ENCODE measurements at regions of chr6 and their contacts with region 1.

Region 1: GRCh38 chr6:63598049-63599036 is 26.1 kb downstream of the LOC128125822 start:
- DNase-seq: peak; percentile 65 to 85 (median 74)
- ATAC-seq: peak; percentile 97
- H3K4me3 ChIP-seq: peak overlapping the region; percentile 43
- H3K27ac ChIP-seq: no peak overlapping the region; the same call in 2 of the 3 replicates
- H3K4me1 ChIP-seq: peaks cover 0 to 4% of the 10 kb centered on the region in 2 experiments; a peak in 3 of 5 replicates
- H3K27me3 ChIP-seq: no peaks in the 10 kb centered on the region
- CTCF ChIP-seq: peak; percentile 79 to 93 (median 89)
- EP300 ChIP-seq: no peak
- POLR2A ChIP-seq: no peak
- RAD21 ChIP-seq: peak; percentile 85 to 88

Region 2: DNA sequence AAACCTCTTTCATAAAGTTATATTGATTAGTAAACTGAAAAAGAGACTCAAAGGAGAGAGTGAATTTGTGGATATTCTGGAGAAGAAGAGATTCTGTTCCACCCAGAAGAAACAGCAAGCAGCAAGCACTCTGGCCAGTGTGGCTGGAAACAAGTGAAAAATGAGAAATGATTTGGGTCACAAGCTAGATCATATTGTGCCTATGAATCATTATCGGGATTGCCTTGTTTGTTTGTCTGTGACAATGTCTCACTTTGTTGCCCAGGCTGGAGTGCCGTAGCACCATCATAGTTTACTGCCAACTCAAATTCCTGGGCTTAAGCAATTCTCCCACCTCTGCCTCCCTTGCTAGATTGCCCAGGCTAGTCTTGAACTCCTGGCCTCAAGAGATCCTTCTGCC is 132.6 kb before region 1 on chr6:
- CTCF ChIA-PET with region 1: no interaction called
- POLR2A ChIA-PET with region 1: no interaction called
- in situ Hi-C with region 1: no loop called
- intact Hi-C with region 1: no loop called
- DNase-seq: no peak
- ATAC-seq: no peak
- H3K4me3 ChIP-seq: no peak overlapping the region
- H3K27ac ChIP-seq: no peak overlapping the region
- H3K4me1 ChIP-seq: no peaks in the 10 kb centered on the region
- H3K27me3 ChIP-seq: no peaks in the 10 kb centered on the region
- CTCF ChIP-seq: no peak
- EP300 ChIP-seq: no peak
- POLR2A ChIP-seq: no peak
- RAD21 ChIP-seq: no peak

Region 3: DNA sequence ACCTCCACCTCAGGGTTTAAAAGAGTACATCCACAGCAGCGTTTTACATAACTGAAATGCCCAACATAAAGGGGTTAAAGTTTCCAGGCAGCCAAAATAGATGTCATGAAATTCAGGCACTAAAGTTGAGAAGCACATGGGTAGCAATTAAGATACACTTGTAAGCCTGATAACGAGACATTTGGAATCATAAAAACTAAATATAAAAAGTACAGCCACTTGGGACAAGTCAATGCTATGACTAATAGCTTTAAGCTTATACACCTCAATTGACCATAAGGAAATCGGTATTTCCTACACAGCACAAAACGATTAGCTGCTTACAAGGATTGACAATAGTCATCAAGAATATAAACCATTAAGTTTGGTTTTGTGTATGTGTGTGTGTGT is 14.2 kb before region 1 on chr6:
- CTCF ChIA-PET with region 1: no interaction called
- POLR2A ChIA-PET with region 1: interaction called, 14 read pairs
- in situ Hi-C with region 1: no loop called
- intact Hi-C with region 1: no loop called
- DNase-seq: no peak
- ATAC-seq: peak; percentile 34
- H3K4me3 ChIP-seq: no peak overlapping the region
- H3K27ac ChIP-seq: no peak overlapping the region
- H3K4me1 ChIP-seq: no peaks in the 10 kb centered on the region
- H3K27me3 ChIP-seq: no peaks in the 10 kb centered on the region
- CTCF ChIP-seq: no peak
- EP300 ChIP-seq: no peak
- POLR2A ChIP-seq: no peak
- RAD21 ChIP-seq: no peak

Region 4: GRCh38 chr6:63635588-63636517 is 37.5 kb after region 1 on chr6 and contains the start of gene PHF3:
- CTCF ChIA-PET with region 1: interaction called, 3 read pairs
- POLR2A ChIA-PET with region 1: no interaction called
- in situ Hi-C with region 1: no loop called
- intact Hi-C with region 1: loop called (anchors 5 kb)
- DNase-seq: peak; percentile 94 to 96 (median 95)
- ATAC-seq: peak; percentile 91
- H3K4me3 ChIP-seq: peak within 1 kb of the TSS; percentile 93
- H3K27ac ChIP-seq: peak within 1 kb of the TSS; percentile 95
- H3K4me1 ChIP-seq: peaks cover 13 to 21% of the 10 kb centered on the region in 2 experiments; a peak in 3 of 5 replicates
- H3K27me3 ChIP-seq: no peaks in the 10 kb centered on the region
- CTCF ChIP-seq: no peak; a peak in 2 of 6 replicates
- EP300 ChIP-seq: no peak; the same call in 1 of the 2 replicates
- POLR2A ChIP-seq: peak; percentile 80
- RAD21 ChIP-seq: no peak
- polyA plus RNA-seq, gene PHF3: 8.1 to 8.6 TPM

Region 5: GRCh38 chr6:63724721-63725120 is 126.4 kb after region 1 on chr6:
- CTCF ChIA-PET with region 1: no interaction called
- POLR2A ChIA-PET with region 1: no interaction called
- in situ Hi-C with region 1: no loop called
- intact Hi-C with region 1: loop called (anchors 10 kb)
- DNase-seq: no peak
- ATAC-seq: no peak
- H3K4me3 ChIP-seq: no peak overlapping the region
- H3K27ac ChIP-seq: no peak overlapping the region
- H3K4me1 ChIP-seq: no peaks in the 10 kb centered on the region
- H3K27me3 ChIP-seq: no peaks in the 10 kb centered on the region
- CTCF ChIP-seq: no peak
- EP300 ChIP-seq: no peak
- POLR2A ChIP-seq: no peak
- RAD21 ChIP-seq: no peak

Region 6: GRCh38 chr6:63764318-63764916 is 166.1 kb after region 1 on chr6:
- CTCF ChIA-PET with region 1: interaction called, 13 read pairs
- POLR2A ChIA-PET with region 1: no interaction called
- in situ Hi-C with region 1: loop called (anchors 5 kb)
- intact Hi-C with region 1: loop called (anchors 1 kb)
- DNase-seq: peak in 3 of 4 experiments; percentile 14 to 54 (median 17)
- ATAC-seq: peak; percentile 53; the same call in 2 of the 3 replicates
- H3K4me3 ChIP-seq: no peak overlapping the region
- H3K27ac ChIP-seq: no peak overlapping the region
- H3K4me1 ChIP-seq: no peaks in the 10 kb centered on the region
- H3K27me3 ChIP-seq: no peaks in the 10 kb centered on the region
- CTCF ChIP-seq: peak in 2 of 3 experiments; percentile 24 to 70; a peak in 3 of 6 replicates
- EP300 ChIP-seq: no peak
- POLR2A ChIP-seq: no peak
- RAD21 ChIP-seq: peak; percentile 69 to 71